K562 (cell line): ENCODE measurements at regions of chr1 and their contacts with region 1.

Region 1: DNA sequence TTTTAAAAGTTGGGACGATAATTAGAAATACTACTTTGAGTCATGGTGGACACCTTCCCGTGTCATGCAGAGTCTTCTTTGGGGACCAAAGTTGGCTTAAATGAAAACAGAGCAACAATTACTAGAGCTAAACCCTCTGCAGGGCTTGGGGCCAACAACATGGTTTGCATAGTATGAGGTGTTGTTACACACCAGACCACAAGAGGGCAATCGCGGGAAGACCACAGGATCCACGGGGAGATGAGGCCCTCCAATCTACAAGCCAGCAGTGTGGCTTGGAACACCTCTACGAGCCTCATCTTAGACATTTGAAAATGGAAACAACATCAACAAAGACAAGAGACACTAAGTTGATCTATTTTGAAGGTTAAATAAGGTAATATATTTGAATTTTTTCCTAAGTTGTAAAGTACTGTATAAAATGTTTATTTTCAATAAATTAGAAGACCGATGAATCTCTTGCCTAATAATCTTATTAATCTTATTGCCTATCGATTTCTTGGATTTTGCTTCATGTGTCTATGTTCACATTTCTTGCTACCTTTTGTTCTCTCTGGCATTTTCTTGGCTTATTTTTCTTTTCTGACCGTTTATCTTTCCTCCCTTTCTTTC is 8.2 kb upstream of the SMCP start:
- DNase-seq: peak; percentile 76 to 81 (median 78)
- ATAC-seq: peak; percentile 94
- H3K4me3 ChIP-seq: no peak overlapping the region
- H3K27ac ChIP-seq: no peak overlapping the region
- H3K4me1 ChIP-seq: no peaks in the 10 kb centered on the region
- H3K27me3 ChIP-seq: no peaks in the 10 kb centered on the region; a peak in 1 of 5 replicates
- CTCF ChIP-seq: peak; percentile 72 to 85 (median 80)
- EP300 ChIP-seq: no peak
- POLR2A ChIP-seq: no peak
- RAD21 ChIP-seq: peak; percentile 59 to 65

Region 2: DNA sequence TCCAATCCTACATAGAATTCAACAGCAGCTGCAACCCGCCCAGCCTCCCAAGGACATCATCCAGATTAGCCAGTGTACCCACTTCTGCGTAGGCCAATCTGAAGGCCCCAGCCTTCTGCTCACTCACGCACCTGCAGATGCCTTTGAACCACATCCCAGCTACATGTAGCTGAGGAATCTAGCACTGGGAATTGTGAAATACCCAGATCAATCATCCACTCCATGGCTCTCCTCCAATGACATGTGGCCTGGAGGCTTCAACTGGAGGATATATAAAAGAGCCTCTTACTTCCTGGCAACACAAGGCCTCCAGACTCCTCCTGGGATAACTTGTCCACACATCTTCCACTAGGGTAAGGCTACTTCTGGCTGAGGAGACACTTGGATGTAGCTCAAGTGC is 27.4 kb before region 1 on chr1 and contains the start of gene LCE6A:
- CTCF ChIA-PET with region 1: no interaction called
- POLR2A ChIA-PET with region 1: no interaction called
- in situ Hi-C with region 1: no loop called
- intact Hi-C with region 1: no loop called
- DNase-seq: no peak
- ATAC-seq: no peak
- H3K4me3 ChIP-seq: no peak within 1 kb of the TSS
- H3K27ac ChIP-seq: no peak within 1 kb of the TSS
- H3K4me1 ChIP-seq: no peaks in the 10 kb centered on the region
- H3K27me3 ChIP-seq: no peaks in the 10 kb centered on the region; a peak in 1 of 5 replicates
- CTCF ChIP-seq: no peak
- EP300 ChIP-seq: no peak
- POLR2A ChIP-seq: no peak
- RAD21 ChIP-seq: no peak
- polyA plus RNA-seq, gene LCE6A: not detected

Region 3: GRCh38 chr1:153032677-153033308 is 162.9 kb after region 1 on chr1:
- CTCF ChIA-PET with region 1: no interaction called
- POLR2A ChIA-PET with region 1: no interaction called
- in situ Hi-C with region 1: no loop called
- intact Hi-C with region 1: loop called (anchors 2 kb)
- DNase-seq: peak in 2 of 4 experiments; percentile 7 to 36
- ATAC-seq: peak; percentile 80
- H3K4me3 ChIP-seq: no peak overlapping the region
- H3K27ac ChIP-seq: no peak overlapping the region
- H3K4me1 ChIP-seq: no peaks in the 10 kb centered on the region
- H3K27me3 ChIP-seq: no peaks in the 10 kb centered on the region
- CTCF ChIP-seq: peak; percentile 16 to 48 (median 34); a peak in 2 of 6 replicates
- EP300 ChIP-seq: no peak
- POLR2A ChIP-seq: no peak
- RAD21 ChIP-seq: peak; percentile 48 to 62; a peak in 3 of 4 replicates

Region 4: DNA sequence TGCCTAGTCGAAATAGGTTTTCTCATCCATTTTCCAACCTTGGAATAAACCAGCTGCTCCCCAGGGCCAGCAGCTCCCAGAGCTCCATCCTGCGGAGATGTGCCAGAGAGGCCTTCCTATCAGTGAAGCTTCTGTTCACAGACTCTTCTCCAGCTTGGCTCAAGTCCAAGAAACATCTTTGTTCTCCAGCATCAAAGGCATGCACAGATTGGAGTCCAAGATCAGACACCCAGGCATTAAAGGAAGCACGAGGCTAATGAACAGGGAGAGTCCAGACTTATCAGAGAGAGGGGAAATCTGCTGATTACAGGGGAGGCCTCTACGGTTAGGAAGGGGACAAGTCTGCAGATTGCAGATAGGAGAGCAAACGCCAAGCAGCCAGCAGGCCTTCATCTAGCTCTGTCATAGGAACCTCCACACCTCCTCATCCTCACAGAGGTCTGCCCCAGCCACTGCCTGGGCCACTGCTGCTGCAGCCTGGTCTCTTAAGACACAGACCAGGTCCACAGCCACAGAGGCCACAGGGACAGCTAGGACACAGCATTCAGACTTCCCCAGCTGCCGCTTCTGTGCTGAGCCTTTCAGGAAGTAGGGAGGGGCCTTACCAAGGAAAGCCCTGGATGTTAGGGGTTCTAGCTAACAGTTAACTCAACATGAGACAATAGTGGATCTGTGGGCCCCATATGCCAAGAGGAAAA is 350.8 kb after region 1 on chr1:
- CTCF ChIA-PET with region 1: interaction called, 12 read pairs
- POLR2A ChIA-PET with region 1: no interaction called
- in situ Hi-C with region 1: loop called (anchors 10 kb)
- intact Hi-C with region 1: loop called (anchors 10 kb)
- DNase-seq: peak in 2 of 4 experiments; percentile 14 to 33
- ATAC-seq: no peak; the same call in 2 of the 3 replicates
- H3K4me3 ChIP-seq: no peak overlapping the region
- H3K27ac ChIP-seq: no peak overlapping the region
- H3K4me1 ChIP-seq: no peaks in the 10 kb centered on the region; a peak in 1 of 5 replicates
- H3K27me3 ChIP-seq: peaks cover 2 to 18% of the 10 kb centered on the region in 2 experiments; a peak in 1 of 5 replicates
- CTCF ChIP-seq: no peak
- EP300 ChIP-seq: 0 out of 2 replicates have a peak, but pooled peaks have one; percentile 11
- POLR2A ChIP-seq: no peak
- RAD21 ChIP-seq: no peak

Region 5: DNA sequence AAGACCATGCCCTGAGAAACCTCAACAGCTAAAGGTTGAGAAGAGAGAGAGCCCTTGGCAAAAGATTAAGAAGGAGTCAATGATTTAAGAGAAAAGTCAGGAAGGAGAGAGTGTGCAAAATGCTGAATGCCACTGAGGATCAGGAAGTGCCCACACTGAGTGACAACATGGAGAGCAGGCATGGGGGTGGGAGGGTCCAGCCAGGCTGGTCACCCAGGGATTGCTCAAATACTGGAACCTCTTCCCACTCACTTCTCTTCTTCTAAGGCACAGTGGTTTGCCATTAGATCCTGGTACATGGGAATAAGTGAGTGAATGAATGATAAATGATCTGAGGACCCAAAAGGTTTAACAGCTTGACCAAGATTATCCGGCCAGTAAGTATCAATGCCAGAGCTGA is 358.6 kb after region 1 on chr1:
- CTCF ChIA-PET with region 1: interaction called, 14 read pairs
- POLR2A ChIA-PET with region 1: no interaction called
- in situ Hi-C with region 1: loop called (anchors 10 kb)
- intact Hi-C with region 1: loop called (anchors 10 kb)
- DNase-seq: no peak
- ATAC-seq: no peak
- H3K4me3 ChIP-seq: no peak overlapping the region
- H3K27ac ChIP-seq: no peak overlapping the region
- H3K4me1 ChIP-seq: no peaks in the 10 kb centered on the region
- H3K27me3 ChIP-seq: peaks cover 2 to 9% of the 10 kb centered on the region in 2 experiments; a peak in 1 of 5 replicates
- CTCF ChIP-seq: no peak
- EP300 ChIP-seq: no peak
- POLR2A ChIP-seq: no peak
- RAD21 ChIP-seq: no peak